ENCODE measurements at regions of chr1 and their contacts with region 1.

Region 1: GRCh38 chr1:26500488-26501175 is 28.4 kb downstream of the HMGN2 start:
- DNase-seq: peak; percentile 85 to 87 (median 86)
- H3K4me3 ChIP-seq: peak overlapping the region; percentile 58 to 95
- H3K4me3 Mint-ChIP-seq: peak overlapping the region; percentile 83 to 90 (median 87)
- H3K27ac ChIP-seq: peak overlapping the region; percentile 87
- H3K27ac Mint-ChIP-seq: peak overlapping the region; percentile 85 to 95 (median 94)
- H3K4me1 ChIP-seq: peaks cover 16% of the 10 kb centered on the region
- H3K4me1 Mint-ChIP-seq: peaks cover 2 to 32% (median 12%) of the 10 kb centered on the region in 4 donors
- H3K27me3 ChIP-seq: no peaks in the 10 kb centered on the region
- H3K27me3 Mint-ChIP-seq: no peaks in the 10 kb centered on the region

Region 2: GRCh38 chr1:26431979-26432695 is 68.5 kb before region 1 on chr1 and contains the start of gene DHDDS:
- CTCF ChIA-PET with region 1: interaction called, 6 read pairs
- POLR2A ChIA-PET with region 1: interaction called, 9 read pairs
- intact Hi-C with region 1: loop called (anchors 1 kb)
- DNase-seq: peak; percentile 97 to 99 (median 97)
- H3K4me3 ChIP-seq: peak within 1 kb of the TSS; percentile 85 to 88
- H3K4me3 Mint-ChIP-seq: peak within 1 kb of the TSS; percentile 89 to 98 (median 94)
- H3K27ac ChIP-seq: peak within 1 kb of the TSS; percentile 69
- H3K27ac Mint-ChIP-seq: peak within 1 kb of the TSS; percentile 71 to 98 (median 97)
- H3K4me1 ChIP-seq: peaks cover 28% of the 10 kb centered on the region
- H3K4me1 Mint-ChIP-seq: peaks cover 10 to 25% (median 17%) of the 10 kb centered on the region in 4 donors
- H3K27me3 ChIP-seq: no peaks in the 10 kb centered on the region
- H3K27me3 Mint-ChIP-seq: peaks cover 2 to 4% of the 10 kb centered on the region in 2 donors
- total RNA-seq, gene DHDDS: 44.4 to 46.2 TPM

Region 3: DNA sequence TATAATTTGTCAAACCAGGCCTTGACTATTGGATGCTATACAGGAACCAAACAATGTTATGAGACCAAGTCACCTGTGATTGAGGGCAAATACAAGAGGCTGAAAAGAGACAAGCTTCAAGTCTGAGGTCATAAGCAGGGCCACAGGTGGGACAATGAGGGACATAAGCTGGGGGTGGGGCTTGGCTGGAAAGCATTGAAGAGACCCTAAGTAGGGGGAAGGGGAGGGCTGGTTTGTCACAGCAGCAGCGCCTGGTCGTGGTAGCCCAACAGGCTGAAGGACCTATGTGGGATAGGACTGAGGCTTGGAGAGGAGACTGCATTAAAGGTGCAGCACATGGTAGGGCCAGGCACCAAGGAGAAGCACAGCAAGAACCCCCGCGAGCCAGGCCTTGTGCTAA is 10.5 kb before region 1 on chr1:
- CTCF ChIA-PET with region 1: interaction called, 11 read pairs
- POLR2A ChIA-PET with region 1: interaction called, 5 read pairs
- intact Hi-C with region 1: no loop called
- DNase-seq: no peak
- H3K4me3 ChIP-seq: no peak overlapping the region
- H3K4me3 Mint-ChIP-seq: no peak overlapping the region
- H3K27ac ChIP-seq: no peak overlapping the region
- H3K27ac Mint-ChIP-seq: no peak overlapping the region
- H3K4me1 ChIP-seq: no peaks in the 10 kb centered on the region
- H3K4me1 Mint-ChIP-seq: no peaks in the 10 kb centered on the region
- H3K27me3 ChIP-seq: no peaks in the 10 kb centered on the region
- H3K27me3 Mint-ChIP-seq: no peaks in the 10 kb centered on the region

Region 4: DNA sequence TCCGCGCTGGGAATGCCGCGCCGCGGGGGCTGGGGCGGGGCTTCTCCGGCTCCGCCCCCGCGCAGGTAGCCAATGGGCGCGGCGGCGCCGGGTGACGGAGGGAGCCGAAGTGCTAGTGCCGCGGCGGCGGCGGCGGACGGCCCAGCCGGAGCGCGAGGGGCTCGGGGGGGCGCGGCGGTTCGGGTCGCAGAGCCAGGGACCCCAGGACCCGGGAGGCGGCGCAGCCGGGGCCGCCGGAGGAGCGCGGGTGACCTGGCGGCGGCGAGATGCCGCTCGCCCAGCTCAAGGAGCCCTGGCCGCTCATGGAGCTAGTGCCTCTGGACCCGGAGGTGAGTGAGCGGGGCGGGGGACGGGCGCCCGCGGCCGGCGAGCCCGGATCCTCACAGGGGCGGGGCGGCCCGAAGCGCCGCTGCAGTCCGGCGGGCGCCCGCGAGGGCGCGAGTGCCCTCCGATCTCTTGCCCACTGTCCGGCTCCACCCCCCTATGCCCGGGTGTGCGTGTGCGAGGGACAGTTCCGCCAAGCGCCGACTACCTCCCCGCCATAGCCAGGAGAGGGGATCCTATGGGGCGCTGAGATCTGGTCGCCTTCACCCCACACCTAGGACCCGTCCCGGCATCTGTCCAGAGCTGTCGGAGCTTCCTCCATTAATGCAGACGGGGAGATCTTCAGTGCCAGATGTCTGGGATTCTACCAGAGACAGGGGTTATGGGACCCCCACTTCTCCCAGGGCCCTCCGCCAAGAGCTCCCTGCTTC is 29.2 kb after region 1 on chr1 and contains the start of gene RPS6KA1:
- CTCF ChIA-PET with region 1: interaction called, 47 read pairs
- POLR2A ChIA-PET with region 1: interaction called, 36 read pairs
- intact Hi-C with region 1: no loop called
- DNase-seq: peak; percentile 51 to 67 (median 54)
- H3K4me3 ChIP-seq: peak within 1 kb of the TSS; percentile 65 to 75
- H3K4me3 Mint-ChIP-seq: peak within 1 kb of the TSS; percentile 89 to 98 (median 91)
- H3K27ac ChIP-seq: peak within 1 kb of the TSS; percentile 62
- H3K27ac Mint-ChIP-seq: peak within 1 kb of the TSS; percentile 78 to 94 (median 87)
- H3K4me1 ChIP-seq: peaks cover 44% of the 10 kb centered on the region
- H3K4me1 Mint-ChIP-seq: peaks cover 16 to 48% (median 30%) of the 10 kb centered on the region in 4 donors
- H3K27me3 ChIP-seq: no peaks in the 10 kb centered on the region
- H3K27me3 Mint-ChIP-seq: no peaks in the 10 kb centered on the region
- total RNA-seq, gene RPS6KA1: 106 to 108 TPM

Region 5: GRCh38 chr1:26541816-26542711 is 41.4 kb after region 1 on chr1:
- CTCF ChIA-PET with region 1: interaction called, 47 read pairs
- POLR2A ChIA-PET with region 1: interaction called, 81 read pairs
- intact Hi-C with region 1: loop called (anchors 1 kb)
- DNase-seq: peak; percentile 70 to 90 (median 71)
- H3K4me3 ChIP-seq: peak overlapping the region; percentile 12 to 34
- H3K4me3 Mint-ChIP-seq: peak overlapping the region; percentile 78 to 89 (median 84)
- H3K27ac ChIP-seq: peak overlapping the region; percentile 75
- H3K27ac Mint-ChIP-seq: peak overlapping the region; percentile 94 to 98 (median 95)
- H3K4me1 ChIP-seq: peaks cover 97% of the 10 kb centered on the region
- H3K4me1 Mint-ChIP-seq: peaks cover 61 to 96% (median 84%) of the 10 kb centered on the region in 4 donors
- H3K27me3 ChIP-seq: no peaks in the 10 kb centered on the region
- H3K27me3 Mint-ChIP-seq: no peaks in the 10 kb centered on the region

Region 6: DNA sequence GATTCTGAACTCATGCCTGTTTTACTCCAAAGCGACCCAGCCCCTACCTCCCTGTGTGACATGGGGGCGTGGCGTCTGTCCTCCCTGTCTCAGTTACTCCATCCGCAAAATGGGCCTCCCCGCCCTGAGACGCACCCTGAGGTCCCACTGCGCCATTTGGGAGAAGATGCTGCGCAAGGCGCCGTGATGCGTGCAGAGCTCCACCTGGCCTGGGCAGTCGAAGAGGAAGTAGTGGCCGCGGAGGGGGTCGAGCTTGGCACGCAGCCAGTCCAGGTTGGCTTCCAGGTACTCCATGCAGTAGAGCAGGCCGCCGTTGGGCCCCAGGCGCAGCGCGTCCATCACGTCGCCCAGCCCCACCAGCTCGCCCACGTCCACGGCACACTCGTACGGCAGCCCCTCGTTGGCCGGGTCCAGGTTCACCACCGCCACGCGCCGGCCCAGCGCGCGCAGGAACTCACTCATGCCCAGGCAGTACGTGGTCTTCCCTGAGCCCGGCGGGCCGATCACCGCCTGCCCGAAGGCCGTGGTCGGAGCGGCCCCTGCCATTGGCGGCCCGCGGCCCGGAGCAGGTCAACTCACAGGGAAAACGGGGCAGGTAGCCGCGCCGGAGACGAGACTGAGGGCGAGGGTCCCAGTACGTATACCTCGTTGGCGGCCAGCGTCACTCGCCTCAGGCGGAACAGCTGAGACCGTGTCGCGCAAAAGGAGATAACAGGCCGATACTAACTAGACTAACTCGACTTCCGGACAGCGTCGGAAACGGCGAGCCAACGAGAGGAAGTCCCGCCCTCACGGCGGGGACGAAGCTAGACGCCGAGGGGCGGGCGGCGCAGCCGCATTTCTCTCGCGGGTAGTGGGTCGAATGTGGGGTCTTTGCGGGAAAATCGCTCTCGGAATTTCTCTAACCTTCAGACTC is 389.2 kb after region 1 on chr1 and contains the start of gene GPN2:
- CTCF ChIA-PET with region 1: no interaction called
- POLR2A ChIA-PET with region 1: interaction called, 16 read pairs
- intact Hi-C with region 1: no loop called
- DNase-seq: peak; percentile 72 to 84 (median 75)
- H3K4me3 ChIP-seq: peak within 1 kb of the TSS; percentile 81 to 98
- H3K4me3 Mint-ChIP-seq: peak within 1 kb of the TSS; percentile 91 to 97 (median 96)
- H3K27ac ChIP-seq: peak within 1 kb of the TSS; percentile 93
- H3K27ac Mint-ChIP-seq: peak within 1 kb of the TSS; percentile 97 to 98 (median 97)
- H3K4me1 ChIP-seq: peaks cover 34% of the 10 kb centered on the region
- H3K4me1 Mint-ChIP-seq: peaks cover 22 to 46% (median 31%) of the 10 kb centered on the region in 4 donors
- H3K27me3 ChIP-seq: no peaks in the 10 kb centered on the region
- H3K27me3 Mint-ChIP-seq: no peaks in the 10 kb centered on the region
- total RNA-seq, gene GPN2: 37.0 to 38.0 TPM

Measured in CD4-positive, alpha-beta memory T cell (primary cell).